ENCODE measurements at regions of chr3 and their contacts with region 1.

Region 1: DNA sequence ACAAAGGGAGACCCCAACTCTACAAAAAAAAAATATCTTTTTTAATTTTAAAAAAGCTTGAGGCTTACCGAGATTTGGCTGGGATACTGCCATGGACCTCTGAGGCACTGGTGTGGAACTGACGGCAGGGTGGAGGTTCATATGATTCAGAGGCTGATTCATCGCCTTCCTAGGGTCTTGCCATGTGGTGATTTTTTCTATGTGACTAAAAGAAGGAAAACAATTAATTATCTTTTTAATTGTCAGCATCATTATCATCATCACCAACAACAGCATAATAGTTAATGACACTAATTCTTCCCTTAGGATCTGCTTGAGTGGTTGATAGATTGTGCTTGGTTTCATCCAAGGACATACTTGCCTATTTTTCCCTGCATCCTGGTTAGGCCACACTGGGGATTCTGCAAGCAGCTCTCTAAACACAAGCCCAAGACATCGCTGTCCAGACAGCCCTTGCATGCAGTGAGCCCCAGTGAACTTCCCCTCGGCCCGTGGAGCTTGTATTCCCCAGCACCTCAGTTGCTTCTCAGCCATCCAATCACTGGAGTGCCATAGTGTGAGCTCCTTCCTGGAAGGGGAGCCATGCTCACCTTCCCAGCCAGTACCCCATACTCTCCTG is 84.9 kb downstream of the WWTR1 start:
- DNase-seq: no peak
- ATAC-seq: no peak
- H3K4me3 Mint-ChIP-seq: no peak overlapping the region
- H3K27ac Mint-ChIP-seq: no peak overlapping the region
- H3K4me1 Mint-ChIP-seq: peaks cover 52% of the 10 kb centered on the region
- H3K27me3 Mint-ChIP-seq: peaks cover 16% of the 10 kb centered on the region
- CTCF ChIP-seq: no peak

Region 2: DNA sequence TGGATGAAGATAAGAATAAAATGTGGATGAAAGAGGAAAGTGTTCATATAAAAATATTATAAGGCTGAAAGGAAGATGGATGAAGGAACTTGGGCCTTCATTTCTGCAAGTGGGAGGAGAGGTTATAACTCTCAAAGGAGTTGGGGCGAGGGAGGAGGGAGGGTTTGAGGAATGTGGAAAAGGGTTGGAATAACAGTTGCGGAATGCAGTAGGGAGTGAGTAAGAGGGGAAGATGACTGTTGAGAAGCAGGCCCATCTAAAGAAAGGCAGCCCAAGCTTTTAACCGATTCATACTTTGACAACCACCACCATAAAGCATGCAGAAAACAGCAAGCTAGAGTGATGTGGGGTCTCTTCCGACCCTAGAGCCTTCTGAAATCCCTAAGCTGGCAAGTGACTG is 106.7 kb before region 1 on chr3:
- CTCF ChIA-PET with region 1: no interaction called
- POLR2A ChIA-PET with region 1: no interaction called
- DNase-seq: no peak
- ATAC-seq: peak; percentile 61
- H3K4me3 Mint-ChIP-seq: no peak overlapping the region
- H3K27ac Mint-ChIP-seq: no peak overlapping the region
- H3K4me1 Mint-ChIP-seq: peaks cover 22% of the 10 kb centered on the region
- H3K27me3 Mint-ChIP-seq: no peaks in the 10 kb centered on the region
- CTCF ChIP-seq: no peak

Region 3: GRCh38 chr3:149519912-149520311 is 53.0 kb before region 1 on chr3:
- CTCF ChIA-PET with region 1: no interaction called
- POLR2A ChIA-PET with region 1: no interaction called
- DNase-seq: no peak
- ATAC-seq: no peak
- H3K4me3 Mint-ChIP-seq: no peak overlapping the region
- H3K27ac Mint-ChIP-seq: no peak overlapping the region
- H3K4me1 Mint-ChIP-seq: no peaks in the 10 kb centered on the region
- H3K27me3 Mint-ChIP-seq: no peaks in the 10 kb centered on the region
- CTCF ChIP-seq: no peak

Region 4: GRCh38 chr3:149536429-149536828 is 36.5 kb before region 1 on chr3:
- CTCF ChIA-PET with region 1: interaction called, 14 read pairs
- POLR2A ChIA-PET with region 1: no interaction called
- DNase-seq: peak; percentile 74
- ATAC-seq: peak; percentile 82
- H3K4me3 Mint-ChIP-seq: 0 out of 2 replicates have a peak overlapping the region, but pooled peaks have one; percentile 19
- H3K27ac Mint-ChIP-seq: no peak overlapping the region
- H3K4me1 Mint-ChIP-seq: peaks cover 51% of the 10 kb centered on the region
- H3K27me3 Mint-ChIP-seq: no peaks in the 10 kb centered on the region
- CTCF ChIP-seq: no peak

Region 5: GRCh38 chr3:149592758-149593240 is 19.9 kb after region 1 on chr3:
- CTCF ChIA-PET with region 1: interaction called, 12 read pairs
- POLR2A ChIA-PET with region 1: interaction called, 3 read pairs
- DNase-seq: no peak
- ATAC-seq: no peak; the same call in 1 of the 2 replicates
- H3K4me3 Mint-ChIP-seq: no peak overlapping the region
- H3K27ac Mint-ChIP-seq: no peak overlapping the region; the same call in 1 of the 2 replicates
- H3K4me1 Mint-ChIP-seq: peaks cover 41% of the 10 kb centered on the region
- H3K27me3 Mint-ChIP-seq: no peaks in the 10 kb centered on the region
- CTCF ChIP-seq: no peak

Region 6: GRCh38 chr3:149670742-149671492 is 98.0 kb after region 1 on chr3:
- CTCF ChIA-PET with region 1: interaction called, 10 read pairs
- POLR2A ChIA-PET with region 1: no interaction called
- DNase-seq: no peak
- ATAC-seq: peak; percentile 93
- H3K4me3 Mint-ChIP-seq: peak overlapping the region; percentile 64
- H3K27ac Mint-ChIP-seq: peak overlapping the region; percentile 70
- H3K4me1 Mint-ChIP-seq: peaks cover 35% of the 10 kb centered on the region
- H3K27me3 Mint-ChIP-seq: peaks cover 27% of the 10 kb centered on the region
- CTCF ChIP-seq: no peak

Measured in WTC11 (cell line).